Gastrocnemius medialis (tissue), 4 donors: ENCODE measurements at regions of chr14 and their contacts with region 1.

Region 1: GRCh38 chr14:81453166-81453766 is 53.1 kb upstream of the STON2 start:
- DNase-seq: peak; percentile 36 to 39
- ATAC-seq: peak; percentile 38 to 50
- H3K4me3 ChIP-seq: no peak overlapping the region
- H3K27ac ChIP-seq: peak overlapping the region; percentile 17 to 89 (median 84)
- H3K4me1 ChIP-seq: peaks cover 27 to 37% of the 10 kb centered on the region in 2 donors
- H3K27me3 ChIP-seq: no peaks in the 10 kb centered on the region
- CTCF ChIP-seq: peak; percentile 86 to 96 (median 90)
- POLR2A ChIP-seq: no peak

Region 2: DNA sequence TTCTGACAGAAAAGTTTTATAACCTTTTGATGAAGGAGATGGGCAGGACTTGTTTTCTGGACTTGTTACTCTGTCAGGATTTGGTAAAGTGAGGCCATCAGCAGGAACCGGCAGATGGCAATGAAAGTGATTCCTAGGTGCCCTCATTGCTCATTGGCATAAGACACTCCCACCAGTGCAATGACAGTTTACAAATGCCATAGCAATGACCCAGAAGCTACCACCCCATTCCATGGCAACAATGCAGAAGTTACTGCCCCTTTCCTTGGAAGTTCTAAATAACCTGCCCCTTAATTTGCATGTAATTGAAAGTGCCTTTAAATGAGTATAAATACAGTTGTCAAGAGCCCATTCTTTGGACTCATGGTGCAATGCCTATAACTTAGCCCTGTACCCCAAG is 734.3 kb before region 1 on chr14:
- in situ Hi-C with region 1: no loop called
- intact Hi-C with region 1: no loop called
- DNase-seq: no peak
- ATAC-seq: no peak
- H3K4me3 ChIP-seq: no peak overlapping the region
- H3K27ac ChIP-seq: no peak overlapping the region
- H3K4me1 ChIP-seq: no peaks in the 10 kb centered on the region
- H3K27me3 ChIP-seq: no peaks in the 10 kb centered on the region
- CTCF ChIP-seq: no peak
- POLR2A ChIP-seq: no peak

Region 3: DNA sequence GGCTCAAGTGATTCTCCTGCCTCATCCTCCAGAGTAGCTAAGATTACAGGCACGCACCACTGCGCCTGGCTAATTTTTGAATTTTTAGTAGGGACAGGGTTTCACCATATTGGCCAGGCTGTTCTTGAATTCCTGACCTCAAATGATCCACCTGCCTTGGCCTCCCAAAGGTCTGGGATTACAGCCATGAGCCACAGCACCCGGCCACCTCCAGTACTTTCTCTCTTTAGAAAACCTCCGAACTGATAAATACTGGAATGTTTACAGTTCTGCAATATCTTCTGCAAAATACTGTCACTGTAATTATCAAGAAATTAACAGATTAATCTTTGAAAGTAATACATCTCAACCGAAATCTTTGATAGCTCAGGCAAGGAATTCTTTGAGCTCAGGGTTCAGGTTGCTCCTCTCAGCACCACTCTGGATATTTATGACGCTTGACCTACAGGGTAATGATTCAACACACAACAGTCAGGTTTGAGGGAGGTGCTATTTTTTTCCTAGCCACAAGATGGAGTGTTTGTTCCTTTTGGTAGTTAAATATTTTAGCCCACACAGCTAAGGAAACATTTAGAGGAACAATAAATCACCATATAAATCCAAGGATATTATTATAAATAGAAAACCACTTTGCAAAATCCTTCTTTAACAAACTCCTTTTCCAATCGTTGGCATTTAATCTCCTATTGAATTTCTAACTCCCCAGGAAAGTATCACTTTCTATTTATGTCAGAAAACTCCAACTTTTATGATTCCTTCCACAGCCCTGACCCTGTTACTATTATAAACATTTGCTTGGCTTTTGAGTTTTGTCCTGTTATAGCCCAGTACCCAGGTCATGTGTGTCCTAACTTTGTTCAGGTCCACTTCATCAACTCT is 183.9 kb before region 1 on chr14:
- in situ Hi-C with region 1: loop called (anchors 5 kb)
- intact Hi-C with region 1: loop called (anchors 1 kb)
- DNase-seq: no peak
- ATAC-seq: peak; percentile 90 to 91
- H3K4me3 ChIP-seq: no peak overlapping the region
- H3K27ac ChIP-seq: peak overlapping the region; percentile 49 to 67 (median 60)
- H3K4me1 ChIP-seq: peaks cover 16 to 31% of the 10 kb centered on the region in 2 donors
- H3K27me3 ChIP-seq: no peaks in the 10 kb centered on the region
- CTCF ChIP-seq: peak; percentile 77 to 92 (median 83)
- POLR2A ChIP-seq: no peak